Right ventricle myocardium inferior (tissue), 1 donor: ENCODE measurements at regions of chr22 and their contacts with region 1.

Region 1: DNA sequence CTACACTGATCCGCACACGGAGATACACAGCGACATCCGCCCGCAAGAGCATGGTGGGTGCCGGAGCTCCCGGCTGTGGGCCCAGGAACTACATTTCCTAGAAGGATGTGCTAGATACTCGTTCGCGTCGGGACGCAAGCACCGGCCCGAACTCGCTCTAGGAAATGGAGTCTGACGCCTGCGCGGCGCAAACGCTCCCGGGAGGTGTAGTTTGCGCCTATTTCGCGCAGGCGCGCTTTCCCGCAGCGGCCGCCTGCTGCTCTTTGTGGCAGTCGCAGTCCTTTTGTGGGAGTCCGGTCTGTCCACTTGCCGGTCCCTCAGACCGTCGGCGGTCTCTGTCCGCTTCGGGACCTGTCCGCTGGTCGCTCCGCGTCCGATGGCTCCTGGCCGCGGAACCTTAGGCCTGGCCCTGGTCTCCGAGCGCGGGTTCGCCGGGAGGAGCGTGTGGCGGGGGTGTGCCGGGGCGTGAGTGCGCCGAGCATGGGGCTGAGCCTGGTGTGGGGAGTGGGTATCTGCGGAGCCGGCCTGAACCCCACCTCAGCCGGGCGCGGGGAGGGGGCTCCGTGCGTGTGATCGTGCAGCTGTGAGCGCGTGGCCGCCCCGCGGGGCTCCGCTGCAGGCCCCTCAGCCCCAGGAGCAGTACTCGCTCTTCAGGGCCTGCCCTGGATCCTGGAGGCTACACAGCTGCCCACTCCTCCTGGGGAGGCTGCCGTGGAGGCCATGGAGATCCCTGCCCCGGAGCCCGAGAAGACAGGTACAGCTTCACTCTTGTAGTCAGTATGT is at the start of gene ZNF74:
- DNase-seq: peak; percentile 95
- ATAC-seq: peak; percentile 97
- total RNA-seq, gene ZNF74: 6.3 TPM

Region 2: GRCh38 chr22:20319745-20320658 is 74.1 kb before region 1 on chr22 and contains the start of gene DGCR6L:
- intact Hi-C with region 1: loop called (anchors 10 kb)
- DNase-seq: peak; percentile 99
- ATAC-seq: peak; percentile 93
- total RNA-seq, gene DGCR6L: 44.2 TPM

Region 3: DNA sequence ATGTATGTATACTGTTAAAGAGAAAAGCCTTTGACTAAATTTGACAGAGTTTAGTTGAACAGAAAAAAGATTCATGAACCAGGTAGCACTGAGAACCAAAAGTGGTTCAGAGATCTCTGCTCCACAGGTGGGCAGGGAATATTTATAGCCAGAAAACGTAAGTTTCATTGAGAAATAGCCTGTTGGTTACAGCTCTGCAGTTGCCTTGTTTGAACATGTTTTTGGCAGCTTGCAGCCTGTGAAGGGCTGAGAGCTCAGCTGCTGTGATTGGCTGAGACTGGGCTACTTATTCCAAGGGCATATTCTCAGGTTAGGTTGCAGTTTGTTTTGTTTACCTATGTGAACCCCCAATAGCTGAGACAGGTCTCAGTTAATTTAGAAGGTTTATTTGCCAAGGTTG is 13.6 kb before region 1 on chr22:
- intact Hi-C with region 1: no loop called
- DNase-seq: no peak
- ATAC-seq: no peak

Region 4: DNA sequence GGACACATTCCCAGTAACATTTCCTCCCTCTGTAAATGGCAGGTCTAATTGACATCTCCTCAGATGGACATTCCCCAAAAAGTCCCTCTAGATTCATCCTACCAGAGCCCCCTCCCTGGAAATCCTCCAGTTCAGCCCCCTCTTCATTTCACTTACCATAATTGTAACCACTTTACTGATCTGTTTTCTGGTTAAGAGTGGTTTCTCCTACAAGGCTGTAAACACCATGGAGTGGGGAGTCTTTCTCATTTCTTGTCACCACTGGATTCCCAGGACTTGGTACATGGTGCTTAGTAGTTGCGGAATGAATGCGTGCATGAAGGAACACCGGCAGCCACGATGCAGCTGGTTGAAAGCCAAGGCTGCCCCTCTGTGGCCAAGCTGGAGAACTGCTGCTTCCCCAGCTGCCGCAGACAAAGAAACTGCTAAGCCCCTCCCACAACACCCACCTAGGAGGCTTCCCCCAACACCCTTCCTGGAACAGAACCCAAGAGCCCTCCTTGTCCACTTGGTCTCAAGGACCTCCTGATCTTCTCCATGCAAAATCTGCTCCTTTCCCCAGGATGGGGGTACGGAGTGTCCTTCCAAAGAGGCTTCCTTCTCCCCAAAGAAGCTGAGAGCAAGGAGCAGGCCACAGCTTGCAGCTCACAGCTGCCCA is 62.1 kb after region 1 on chr22:
- intact Hi-C with region 1: loop called (anchors 10 kb)
- DNase-seq: peak; percentile 85
- ATAC-seq: peak; percentile 82